ENCODE measurements at regions of chr20 and their contacts with region 1.

Region 1: DNA sequence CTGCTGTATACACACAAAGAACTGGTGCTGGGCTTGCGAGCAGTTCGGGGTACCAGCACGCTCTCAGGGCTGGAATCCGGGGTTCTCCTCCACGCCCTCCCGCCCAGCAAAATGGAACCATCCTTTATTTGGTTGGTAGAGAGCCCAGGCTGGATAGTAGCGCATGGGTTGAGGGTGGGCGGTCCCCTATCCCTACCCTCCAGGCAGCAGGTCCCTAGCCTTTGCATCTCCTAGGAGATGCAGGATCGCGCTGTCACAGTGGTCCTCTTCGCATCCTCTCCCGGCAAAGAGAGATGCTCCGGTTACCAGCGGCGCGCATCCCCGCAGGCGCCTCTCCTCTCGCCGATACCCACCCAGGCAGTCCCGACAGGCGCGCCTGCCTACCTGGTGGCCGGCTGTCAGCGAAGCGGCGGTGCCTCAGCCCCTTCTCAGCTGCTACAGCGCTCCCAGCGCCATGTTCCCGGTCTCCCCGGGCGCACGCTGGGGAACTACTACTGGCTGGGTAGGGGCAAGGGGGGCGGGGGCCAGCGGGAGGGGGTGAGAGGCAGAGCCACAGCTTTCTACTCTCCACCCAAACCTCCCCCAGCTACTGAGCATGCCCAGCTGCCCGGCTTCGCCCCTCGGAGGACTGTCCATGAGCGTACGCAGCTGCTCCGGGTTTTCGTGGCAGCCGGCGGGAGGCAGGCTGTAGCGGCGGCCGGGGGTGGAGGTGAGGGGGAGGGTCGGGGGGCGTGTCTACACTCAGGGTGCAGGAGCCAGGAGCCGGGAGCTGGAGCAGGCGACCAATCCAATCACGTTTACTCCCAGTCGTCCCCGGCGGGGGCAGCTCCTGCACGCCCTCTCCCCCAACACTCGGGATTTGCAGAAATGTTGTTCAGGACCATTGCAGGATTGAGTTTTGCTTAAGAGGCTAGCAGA is at the start of gene PAK5:
- DNase-seq: peak in 1 of 4 experiments; percentile 0
- ATAC-seq: no peak
- H3K4me3 ChIP-seq: no peak within 1 kb of the TSS
- H3K27ac ChIP-seq: no peak within 1 kb of the TSS
- H3K4me1 ChIP-seq: no peaks in the 10 kb centered on the region
- H3K27me3 ChIP-seq: no peaks in the 10 kb centered on the region
- CTCF ChIP-seq: no peak
- EP300 ChIP-seq: no peak
- POLR2A ChIP-seq: no peak
- RAD21 ChIP-seq: no peak
- polyA plus RNA-seq, gene PAK5: not detected

Region 2: GRCh38 chr20:9581509-9581908 is 257.1 kb before region 1 on chr20:
- CTCF ChIA-PET with region 1: no interaction called
- POLR2A ChIA-PET with region 1: no interaction called
- in situ Hi-C with region 1: no loop called
- intact Hi-C with region 1: no loop called
- DNase-seq: no peak
- ATAC-seq: no peak
- H3K4me3 ChIP-seq: no peak overlapping the region
- H3K27ac ChIP-seq: no peak overlapping the region
- H3K4me1 ChIP-seq: no peaks in the 10 kb centered on the region
- H3K27me3 ChIP-seq: no peaks in the 10 kb centered on the region
- CTCF ChIP-seq: no peak
- EP300 ChIP-seq: no peak
- POLR2A ChIP-seq: no peak
- RAD21 ChIP-seq: no peak

Region 3: DNA sequence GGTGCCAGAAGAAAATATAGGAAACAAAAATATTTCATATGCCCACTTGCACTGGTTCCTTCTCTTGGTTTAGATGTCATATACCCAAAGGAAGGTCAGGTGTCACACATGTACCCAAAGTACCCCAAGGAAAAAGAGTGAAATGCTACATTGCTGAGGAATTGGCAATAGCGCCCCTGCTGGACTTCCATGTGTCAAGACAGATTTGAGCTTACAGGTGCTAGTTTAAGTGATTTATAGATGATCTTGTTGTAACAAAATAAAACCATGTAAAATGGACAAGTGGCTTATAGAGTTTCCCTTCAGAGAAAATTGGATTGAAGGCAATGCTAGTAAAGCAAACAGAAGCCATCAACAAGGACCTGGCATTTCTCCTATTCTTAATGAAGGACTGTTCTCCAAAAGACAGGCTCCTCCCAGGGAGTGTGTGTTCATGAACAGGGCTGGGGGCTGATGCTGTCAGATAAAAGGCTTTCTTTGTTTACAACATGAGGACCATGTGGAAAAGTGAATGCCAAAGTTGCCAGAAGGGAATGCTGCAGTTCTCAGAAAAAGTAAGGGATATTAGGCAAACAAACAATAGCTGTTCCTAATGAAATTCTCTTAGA is 64.5 kb after region 1 on chr20:
- CTCF ChIA-PET with region 1: no interaction called
- POLR2A ChIA-PET with region 1: no interaction called
- in situ Hi-C with region 1: no loop called
- intact Hi-C with region 1: loop called (anchors 2 kb)
- DNase-seq: peak in 1 of 4 experiments; percentile 0
- ATAC-seq: no peak
- H3K4me3 ChIP-seq: no peak overlapping the region
- H3K27ac ChIP-seq: no peak overlapping the region
- H3K4me1 ChIP-seq: no peaks in the 10 kb centered on the region
- H3K27me3 ChIP-seq: no peaks in the 10 kb centered on the region
- CTCF ChIP-seq: 0 out of 6 replicates have a peak, but pooled peaks of 1 of the 3 experiments have one; percentile 16
- EP300 ChIP-seq: no peak
- POLR2A ChIP-seq: no peak
- RAD21 ChIP-seq: no peak

Measured in K562 (cell line).